Activated CD4-positive, alpha-beta T cell treated with anti-CD3 and anti-CD28 coated beads for 36 hours (primary cell): ENCODE measurements at regions of chr17 and their contacts with region 1.

Region 1: GRCh38 chr17:46121841-46122485 is 71.3 kb downstream of the KANSL1 start:
- DNase-seq: no peak
- ATAC-seq: peak; percentile 66
- H3K4me3 Mint-ChIP-seq: peak overlapping the region; percentile 13
- H3K27ac Mint-ChIP-seq: peak overlapping the region; percentile 23
- H3K4me1 Mint-ChIP-seq: peaks cover 81% of the 10 kb centered on the region
- H3K27me3 Mint-ChIP-seq: no peaks in the 10 kb centered on the region

Region 2: GRCh38 chr17:46108550-46109110 is 13.3 kb before region 1 on chr17:
- CTCF ChIA-PET with region 1: interaction called, 13 read pairs
- POLR2A ChIA-PET with region 1: interaction called, 5 read pairs
- intact Hi-C with region 1: no loop called
- DNase-seq: no peak
- ATAC-seq: peak; percentile 47
- H3K4me3 Mint-ChIP-seq: no peak overlapping the region
- H3K27ac Mint-ChIP-seq: peak overlapping the region; percentile 70
- H3K4me1 Mint-ChIP-seq: peaks cover 88% of the 10 kb centered on the region
- H3K27me3 Mint-ChIP-seq: no peaks in the 10 kb centered on the region

Region 3: GRCh38 chr17:46147296-46147695 is 25.3 kb after region 1 on chr17:
- CTCF ChIA-PET with region 1: interaction called, 5 read pairs
- POLR2A ChIA-PET with region 1: interaction called, 5 read pairs
- intact Hi-C with region 1: loop called in 1 of 2 experiments (anchors 2 kb)
- DNase-seq: peak; percentile 38
- ATAC-seq: peak; percentile 9
- H3K4me3 Mint-ChIP-seq: no peak overlapping the region
- H3K27ac Mint-ChIP-seq: peak overlapping the region; percentile 45
- H3K4me1 Mint-ChIP-seq: peaks cover 88% of the 10 kb centered on the region
- H3K27me3 Mint-ChIP-seq: no peaks in the 10 kb centered on the region